ENCODE measurements at regions of chr9 and their contacts with region 1.

Region 1: GRCh38 chr9:130745210-130745800 is 51.7 kb downstream of the EXOSC2 start:
- DNase-seq: no peak
- ATAC-seq: no peak
- H3K4me3 ChIP-seq: no peak overlapping the region
- H3K27ac ChIP-seq: no peak overlapping the region
- H3K4me1 ChIP-seq: peaks cover 0 to 17% (median 2%) of the 10 kb centered on the region in 12 donors
- H3K27me3 ChIP-seq: no peaks in the 10 kb centered on the region
- CTCF ChIP-seq: no peak
- POLR2A ChIP-seq: no peak

Region 2: GRCh38 chr9:130555968-130556367 is 189.3 kb before region 1 on chr9:
- intact Hi-C with region 1: no loop called
- DNase-seq: no peak
- ATAC-seq: no peak
- H3K4me3 ChIP-seq: no peak overlapping the region
- H3K27ac ChIP-seq: no peak overlapping the region
- H3K4me1 ChIP-seq: no peaks in the 10 kb centered on the region
- H3K27me3 ChIP-seq: peaks cover 0 to 8% (median 0%) of the 10 kb centered on the region in 9 donors
- CTCF ChIP-seq: no peak
- POLR2A ChIP-seq: no peak

Region 3: GRCh38 chr9:130728721-130729120 is 16.6 kb before region 1 on chr9:
- intact Hi-C with region 1: loop called in 1 of 10 experiments (anchors 2 kb)
- DNase-seq: no peak
- ATAC-seq: no peak
- H3K4me3 ChIP-seq: no peak overlapping the region
- H3K27ac ChIP-seq: no peak overlapping the region
- H3K4me1 ChIP-seq: peaks cover 0 to 21% (median 14%) of the 10 kb centered on the region in 12 donors
- H3K27me3 ChIP-seq: no peaks in the 10 kb centered on the region
- CTCF ChIP-seq: no peak
- POLR2A ChIP-seq: no peak

Measured in heart left ventricle (tissue), 16 donors.